Left cardiac atrium (tissue), 4 donors: ENCODE measurements at regions of chr19 and their contacts with region 1.

Region 1: DNA sequence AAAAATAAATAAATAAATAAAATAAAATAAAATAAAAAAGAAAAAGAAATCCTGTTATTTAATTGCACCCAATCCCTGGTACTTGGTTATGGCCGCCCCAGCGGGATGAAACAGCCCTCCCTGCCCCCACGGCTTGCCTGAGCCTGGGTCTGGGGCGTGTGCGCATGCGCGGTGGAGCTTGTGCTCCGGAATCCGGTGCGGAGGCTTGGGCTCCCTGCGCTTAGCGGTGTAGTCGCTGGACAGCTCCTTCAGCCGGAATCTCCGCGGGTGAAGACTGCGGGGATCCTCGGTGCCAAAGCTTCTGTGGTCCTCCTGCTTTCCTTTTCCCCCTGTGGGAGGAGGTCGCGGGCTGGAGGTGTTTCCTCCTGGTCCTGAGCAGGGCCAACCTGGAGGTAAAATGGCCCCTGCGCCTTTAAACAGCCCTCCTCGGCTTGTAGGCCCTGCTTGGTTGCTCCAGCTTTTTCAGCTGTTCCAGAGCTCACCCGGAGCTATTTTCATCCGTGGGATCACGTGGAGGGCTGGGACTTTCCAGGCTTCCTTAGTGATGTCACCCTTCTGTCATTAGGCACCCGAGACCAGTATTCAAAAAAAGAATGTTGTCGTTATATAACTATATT is at the start of gene PLA2G4C:
- DNase-seq: peak; percentile 96
- ATAC-seq: peak; percentile 94
- total RNA-seq, gene PLA2G4C: 20.3 to 23.9 TPM

Region 2: GRCh38 chr19:48152551-48152950 is 42.1 kb after region 1 on chr19:
- intact Hi-C with region 1: loop called (anchors 2 to 5 kb)
- DNase-seq: peak; percentile 47
- ATAC-seq: peak in 1 of 2 donors; percentile 49

Region 3: GRCh38 chr19:48255376-48256303 is 145.2 kb after region 1 on chr19 and contains the start of gene CARD8:
- intact Hi-C with region 1: loop called in 1 of 2 experiments (anchors 5 kb)
- DNase-seq: peak; percentile 87
- ATAC-seq: peak; percentile 94 to 95
- total RNA-seq, gene CARD8: 33.5 to 37.4 TPM